ENCODE measurements at regions of chr7 and their contacts with region 1.

Region 1: DNA sequence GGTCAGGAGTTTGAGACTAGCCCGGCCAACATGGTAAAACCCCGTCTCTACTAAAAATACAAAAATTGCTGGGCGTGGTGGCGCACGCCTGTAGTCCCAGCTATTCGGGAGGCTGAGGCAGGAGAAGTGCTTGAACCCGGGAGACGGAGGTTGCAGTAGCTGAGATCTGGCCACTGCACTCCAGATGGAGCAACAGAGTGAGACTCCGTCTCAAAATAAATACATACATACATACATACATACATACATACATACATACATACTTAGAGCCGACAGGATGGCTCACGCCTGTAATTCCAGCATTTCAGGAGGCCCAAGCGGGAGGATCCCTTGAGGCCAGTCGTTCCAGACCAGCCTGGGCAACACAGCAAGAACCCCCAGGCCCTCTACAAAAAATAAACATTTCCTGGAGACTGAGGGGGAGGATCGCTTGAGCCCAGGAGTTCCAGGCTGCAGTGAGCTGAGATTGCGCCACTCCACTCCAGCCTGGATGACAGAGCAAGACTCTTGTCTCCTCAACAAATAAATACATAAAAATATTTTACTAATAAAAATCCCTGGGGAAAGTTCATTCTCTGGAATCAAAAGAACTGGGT is 90.9 kb upstream of the TNRC18 start:
- DNase-seq: no peak
- ATAC-seq: no peak
- H3K4me3 Mint-ChIP-seq: peak overlapping the region; percentile 98
- H3K27ac Mint-ChIP-seq: peak overlapping the region; percentile 97
- H3K4me1 Mint-ChIP-seq: peaks cover 27% of the 10 kb centered on the region
- H3K27me3 Mint-ChIP-seq: no peaks in the 10 kb centered on the region
- CTCF ChIP-seq: no peak

Region 2: GRCh38 chr7:5477723-5478531 is 36.6 kb before region 1 on chr7:
- CTCF ChIA-PET with region 1: no interaction called
- POLR2A ChIA-PET with region 1: no interaction called
- intact Hi-C with region 1: no loop called
- DNase-seq: peak; percentile 44
- ATAC-seq: peak; percentile 93
- H3K4me3 Mint-ChIP-seq: peak overlapping the region; percentile 85
- H3K27ac Mint-ChIP-seq: peak overlapping the region; percentile 46
- H3K4me1 Mint-ChIP-seq: peaks cover 8% of the 10 kb centered on the region
- H3K27me3 Mint-ChIP-seq: no peaks in the 10 kb centered on the region
- CTCF ChIP-seq: no peak

Region 3: DNA sequence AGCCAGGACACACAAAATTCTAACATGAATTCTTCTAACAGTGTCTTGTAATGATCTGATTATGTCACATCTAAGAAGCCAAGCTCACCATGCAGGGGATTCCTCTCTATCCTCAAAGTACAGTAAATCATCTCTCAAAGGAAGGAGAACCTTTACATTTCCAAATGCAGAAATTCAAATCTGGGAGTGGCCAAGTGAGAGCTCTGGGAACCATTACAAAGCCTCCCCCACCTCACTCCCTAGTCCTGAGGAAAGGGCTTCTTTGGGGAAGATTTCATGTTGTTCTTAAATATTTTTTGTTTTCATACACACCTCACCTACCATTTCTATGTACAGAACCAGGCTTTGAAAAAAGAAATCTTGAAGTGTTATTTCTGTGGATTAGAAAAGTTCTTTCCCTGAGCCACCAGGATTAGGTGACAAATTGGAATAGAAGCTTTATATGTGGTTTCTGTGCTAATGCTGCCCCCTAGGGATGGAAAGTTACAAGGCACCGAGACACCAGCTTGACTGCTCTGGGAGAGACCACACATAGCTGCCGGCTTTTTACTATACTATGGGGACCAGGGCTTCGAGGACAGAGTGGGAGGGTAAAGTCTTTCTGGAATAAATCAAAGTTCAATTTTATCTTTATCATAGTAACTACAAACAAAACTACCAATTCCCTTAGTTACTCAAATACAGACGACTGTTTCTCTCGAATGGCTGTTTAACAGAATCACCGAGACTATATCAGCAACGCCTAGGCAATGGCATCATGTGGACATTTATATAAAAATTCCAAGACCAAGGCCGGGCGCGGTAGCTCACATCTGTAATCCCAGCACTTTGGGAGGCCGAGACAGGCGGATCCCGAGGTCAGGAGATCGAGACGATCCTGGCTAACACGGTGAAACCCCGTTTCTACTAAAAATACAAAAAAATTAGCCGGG is 150.8 kb after region 1 on chr7:
- CTCF ChIA-PET with region 1: interaction called, 3 read pairs
- POLR2A ChIA-PET with region 1: interaction called, 11 read pairs
- intact Hi-C with region 1: no loop called
- DNase-seq: no peak
- ATAC-seq: peak; percentile 71
- H3K4me3 Mint-ChIP-seq: no peak overlapping the region
- H3K27ac Mint-ChIP-seq: no peak overlapping the region
- H3K4me1 Mint-ChIP-seq: peaks cover 28% of the 10 kb centered on the region
- H3K27me3 Mint-ChIP-seq: no peaks in the 10 kb centered on the region
- CTCF ChIP-seq: no peak